ENCODE measurements at regions of chr16 and their contacts with region 1.

Region 1: GRCh38 chr16:578870-579405 is 9.2 kb downstream of the PIGQ start:
- H3K4me3 Mint-ChIP-seq: peak overlapping the region; percentile 44
- H3K27ac Mint-ChIP-seq: no peak overlapping the region
- H3K4me1 Mint-ChIP-seq: no peaks in the 10 kb centered on the region
- H3K27me3 Mint-ChIP-seq: no peaks in the 10 kb centered on the region

Region 2: DNA sequence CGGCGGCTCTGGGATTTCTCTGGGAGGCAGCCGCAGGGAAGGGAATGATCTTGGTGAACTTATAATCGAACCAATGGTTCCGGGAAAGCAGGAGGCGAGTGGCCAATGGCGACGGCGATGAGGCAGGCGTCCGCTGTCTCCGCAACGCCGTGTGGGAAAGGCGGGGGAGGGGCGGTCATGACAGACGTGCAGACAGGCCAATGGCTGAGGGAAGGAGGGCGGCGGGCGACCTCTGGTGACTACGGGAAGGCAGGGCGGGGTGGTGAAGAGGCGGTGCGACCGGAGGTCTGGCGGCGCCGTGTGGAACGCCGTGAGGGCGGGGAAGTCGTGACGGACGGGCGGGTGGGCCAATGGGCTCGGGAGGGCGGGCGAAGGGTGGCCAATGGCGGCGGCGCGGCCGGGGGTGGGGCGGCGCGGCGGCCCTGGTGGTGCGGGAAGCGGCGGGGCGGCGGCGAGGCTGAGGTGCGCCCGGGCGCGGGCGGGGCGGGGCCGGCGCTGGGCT is 10.8 kb after region 1 on chr16 and contains the start of gene RAB40C:
- intact Hi-C with region 1: no loop called
- H3K4me3 Mint-ChIP-seq: peak within 1 kb of the TSS; percentile 93
- H3K27ac Mint-ChIP-seq: peak within 1 kb of the TSS; percentile 99
- H3K4me1 Mint-ChIP-seq: peaks cover 60% of the 10 kb centered on the region
- H3K27me3 Mint-ChIP-seq: peaks cover 16% of the 10 kb centered on the region

Region 3: GRCh38 chr16:626787-627186 is 47.8 kb after region 1 on chr16:
- intact Hi-C with region 1: no loop called
- H3K4me3 Mint-ChIP-seq: no peak overlapping the region
- H3K27ac Mint-ChIP-seq: no peak overlapping the region
- H3K4me1 Mint-ChIP-seq: peaks cover 4% of the 10 kb centered on the region
- H3K27me3 Mint-ChIP-seq: peaks cover 7% of the 10 kb centered on the region

Region 4: DNA sequence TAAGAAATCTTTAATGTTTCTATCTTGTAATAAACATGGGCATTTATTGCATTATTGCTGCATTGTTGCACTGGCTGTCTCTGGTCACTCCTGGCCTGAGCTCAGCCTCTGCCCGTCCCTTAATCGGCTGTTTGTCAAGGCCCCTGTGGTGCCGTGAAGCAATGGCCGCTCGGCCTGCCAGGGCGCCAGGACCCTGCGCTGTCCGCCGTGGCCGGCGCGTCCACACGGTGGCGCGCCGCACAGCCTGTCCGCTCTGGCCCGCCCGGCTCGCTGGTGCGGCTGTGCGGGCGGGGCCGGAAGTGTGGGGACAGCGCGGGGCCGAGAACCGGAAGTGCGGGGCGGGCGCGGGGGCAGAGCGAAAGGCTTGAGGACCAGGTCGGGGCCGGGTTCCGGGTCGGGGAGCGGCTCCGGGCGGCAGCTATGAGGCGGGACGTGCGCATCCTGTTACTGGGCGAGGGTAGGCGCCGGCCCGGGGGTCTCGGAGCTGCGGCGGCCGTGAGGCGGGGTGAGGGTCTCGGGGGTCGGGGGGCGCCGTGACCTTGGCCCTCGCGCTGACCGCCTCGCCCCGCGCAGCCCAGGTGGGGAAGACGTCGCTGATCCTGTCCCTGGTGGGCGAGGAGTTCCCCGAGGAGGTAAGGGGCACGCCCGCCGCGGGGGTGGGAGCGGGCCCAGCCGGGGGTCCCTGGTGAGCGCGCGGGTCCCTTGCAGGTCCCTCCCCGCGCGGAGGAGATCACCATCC is 89.0 kb after region 1 on chr16 and contains the start of gene RHOT2:
- intact Hi-C with region 1: loop called (anchors 1 kb)
- H3K4me3 Mint-ChIP-seq: peak within 1 kb of the TSS; percentile 82
- H3K27ac Mint-ChIP-seq: peak within 1 kb of the TSS; percentile 84
- H3K4me1 Mint-ChIP-seq: peaks cover 16% of the 10 kb centered on the region
- H3K27me3 Mint-ChIP-seq: no peaks in the 10 kb centered on the region